Right lobe of liver (tissue), 6 donors: ENCODE measurements at regions of chr1 and their contacts with region 1.

Region 1: DNA sequence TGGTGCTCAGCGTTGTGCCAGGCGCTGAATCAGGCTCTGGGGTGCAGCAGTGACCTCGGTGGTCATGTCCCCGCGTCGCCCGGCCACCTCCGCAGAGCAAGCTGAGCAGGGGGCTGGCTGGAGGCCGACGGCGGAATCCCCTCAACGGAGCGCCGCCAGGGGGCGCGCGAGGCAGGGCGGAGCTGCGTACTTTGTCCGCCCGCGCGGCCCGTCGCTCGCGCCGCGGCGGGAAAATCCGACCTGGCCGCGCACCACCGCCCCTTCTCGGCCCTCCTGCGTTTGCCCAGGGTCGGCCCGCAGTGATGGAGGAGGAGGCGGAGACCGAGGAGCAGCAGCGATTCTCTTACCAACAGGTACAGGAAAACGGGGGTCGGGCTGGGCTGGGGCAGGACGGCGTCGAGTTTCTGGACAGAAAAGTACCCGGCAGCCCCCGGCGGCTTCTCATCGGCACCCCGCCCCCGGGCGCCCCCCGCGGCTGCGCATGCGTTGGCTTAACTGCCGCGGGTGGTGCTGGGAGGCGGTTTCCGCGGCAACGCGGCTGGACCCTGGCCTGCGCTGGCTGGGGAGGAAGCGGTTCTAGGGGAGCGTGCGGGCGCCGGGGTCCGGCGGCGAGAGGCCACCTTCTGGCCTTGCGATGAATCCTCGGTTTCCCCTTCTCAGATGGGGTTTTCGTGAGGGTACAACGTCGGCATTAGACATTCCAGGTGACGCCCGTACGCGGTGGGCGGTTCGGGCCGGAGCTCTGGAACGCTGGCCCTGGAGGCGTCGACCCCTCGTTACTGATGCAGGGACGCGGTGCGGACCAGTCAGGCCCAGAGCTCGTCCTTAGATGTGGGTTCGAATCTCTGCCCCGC is at the start of gene CENPS:
- DNase-seq: peak; percentile 93 to 95 (median 95)
- ATAC-seq: peak; percentile 91 to 96 (median 93)
- H3K4me3 ChIP-seq: peak within 1 kb of the TSS; percentile 84 to 95 (median 89)
- H3K27ac ChIP-seq: no peak within 1 kb of the TSS
- H3K4me1 ChIP-seq: peaks cover 0 to 7% (median 0%) of the 10 kb centered on the region in 4 donors
- H3K27me3 ChIP-seq: no peaks in the 10 kb centered on the region
- CTCF ChIP-seq: peak; percentile 92 to 99 (median 96)
- POLR2A ChIP-seq: no peak
- total RNA-seq, gene CENPS: 1.8 to 9.3 (median 5.7) TPM

Region 2: DNA sequence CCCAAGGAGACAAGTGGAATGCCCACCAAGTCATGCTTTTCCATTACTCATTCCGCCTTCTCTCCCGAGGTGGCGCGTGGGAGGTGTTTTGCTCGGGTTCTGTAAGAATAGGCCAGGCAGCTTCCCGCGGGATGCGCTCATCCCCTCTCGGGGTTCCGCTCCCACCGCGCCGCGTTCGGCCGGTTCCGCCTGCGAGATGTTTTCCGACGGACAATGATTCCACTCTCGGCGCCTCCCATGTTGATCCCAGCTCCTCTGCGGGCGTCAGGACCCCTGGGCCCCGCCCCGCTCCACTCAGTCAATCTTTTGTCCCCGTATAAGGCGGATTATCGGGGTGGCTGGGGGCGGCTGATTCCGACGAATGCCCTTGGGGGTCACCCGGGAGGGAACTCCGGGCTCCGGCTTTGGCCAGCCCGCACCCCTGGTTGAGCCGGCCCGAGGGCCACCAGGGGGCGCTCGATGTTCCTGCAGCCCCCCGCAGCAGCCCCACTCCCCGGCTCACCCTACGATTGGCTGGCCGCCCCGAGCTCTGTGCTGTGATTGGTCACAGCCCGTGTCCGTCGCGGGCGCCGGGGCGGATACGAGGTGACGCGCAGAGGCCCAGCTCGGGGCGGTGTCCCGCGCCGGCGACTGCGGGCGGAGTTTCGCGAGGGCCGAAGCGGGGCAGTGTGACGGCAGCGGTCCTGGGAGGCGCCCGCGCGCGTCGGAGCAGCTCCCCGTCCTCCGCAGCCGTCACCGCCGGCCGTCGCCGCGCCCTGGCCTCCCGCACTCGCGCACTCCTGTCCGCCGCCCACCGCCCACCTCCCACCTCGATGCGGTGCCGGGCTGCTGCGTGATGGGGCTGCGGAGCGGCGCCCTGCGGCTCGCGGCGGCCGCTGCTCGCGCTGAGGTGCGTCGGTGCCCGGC is 220.3 kb before region 1 on chr1 and contains the start of gene KIF1B:
- intact Hi-C with region 1: no loop called
- DNase-seq: peak; percentile 99 to 100 (median 99)
- ATAC-seq: peak; percentile 91 to 98 (median 96)
- H3K4me3 ChIP-seq: peak within 1 kb of the TSS; percentile 78 to 89 (median 88)
- H3K27ac ChIP-seq: peak within 1 kb of the TSS; percentile 91 to 96 (median 95)
- H3K4me1 ChIP-seq: peaks cover 0 to 18% (median 8%) of the 10 kb centered on the region in 4 donors
- H3K27me3 ChIP-seq: no peaks in the 10 kb centered on the region
- CTCF ChIP-seq: peak; percentile 96 to 99 (median 98)
- POLR2A ChIP-seq: peak; percentile 99
- total RNA-seq, gene KIF1B: 21.7 to 29.4 (median 23.2) TPM

Region 3: GRCh38 chr1:10378081-10378841 is 52.2 kb before region 1 on chr1:
- intact Hi-C with region 1: loop called in 1 of 2 experiments (anchors 10 kb)
- DNase-seq: peak; percentile 52 to 72 (median 59)
- ATAC-seq: peak; percentile 66 to 73 (median 68)
- H3K4me3 ChIP-seq: no peak overlapping the region
- H3K27ac ChIP-seq: peak overlapping the region in 2 of 3 donors; percentile 22 to 40
- H3K4me1 ChIP-seq: no peaks in the 10 kb centered on the region
- H3K27me3 ChIP-seq: no peaks in the 10 kb centered on the region
- CTCF ChIP-seq: no peak
- POLR2A ChIP-seq: no peak

Region 4: GRCh38 chr1:10494754-10495474 is 64.5 kb after region 1 on chr1:
- intact Hi-C with region 1: loop called (anchors 5 kb)
- DNase-seq: peak; percentile 73 to 80 (median 79)
- ATAC-seq: peak; percentile 78 to 87 (median 81)
- H3K4me3 ChIP-seq: peak overlapping the region in 1 of 3 donors; percentile 6
- H3K27ac ChIP-seq: no peak overlapping the region
- H3K4me1 ChIP-seq: peaks cover 0 to 45% (median 16%) of the 10 kb centered on the region in 4 donors
- H3K27me3 ChIP-seq: no peaks in the 10 kb centered on the region
- CTCF ChIP-seq: peak; percentile 83 to 91 (median 89)
- POLR2A ChIP-seq: no peak